Activated CD4-positive, alpha-beta T cell treated with anti-CD3 and anti-CD28 coated beads, Interleukin-2, amount 10 ng/mL, durations not matched to agents 24 days and 14 days (primary cell): ENCODE measurements at regions of chr10 and their contacts with region 1.

Region 1: GRCh38 chr10:80205478-80206276 is at the start of gene ANXA11:
- DNase-seq: peak; percentile 94
- H3K4me3 Mint-ChIP-seq: peak within 1 kb of the TSS; percentile 84
- H3K27ac Mint-ChIP-seq: peak within 1 kb of the TSS; percentile 94
- H3K4me1 Mint-ChIP-seq: peaks cover 45% of the 10 kb centered on the region
- H3K27me3 Mint-ChIP-seq: no peaks in the 10 kb centered on the region
- total RNA-seq, gene ANXA11: 223 and 232 TPM in 2 replicates

Region 2: DNA sequence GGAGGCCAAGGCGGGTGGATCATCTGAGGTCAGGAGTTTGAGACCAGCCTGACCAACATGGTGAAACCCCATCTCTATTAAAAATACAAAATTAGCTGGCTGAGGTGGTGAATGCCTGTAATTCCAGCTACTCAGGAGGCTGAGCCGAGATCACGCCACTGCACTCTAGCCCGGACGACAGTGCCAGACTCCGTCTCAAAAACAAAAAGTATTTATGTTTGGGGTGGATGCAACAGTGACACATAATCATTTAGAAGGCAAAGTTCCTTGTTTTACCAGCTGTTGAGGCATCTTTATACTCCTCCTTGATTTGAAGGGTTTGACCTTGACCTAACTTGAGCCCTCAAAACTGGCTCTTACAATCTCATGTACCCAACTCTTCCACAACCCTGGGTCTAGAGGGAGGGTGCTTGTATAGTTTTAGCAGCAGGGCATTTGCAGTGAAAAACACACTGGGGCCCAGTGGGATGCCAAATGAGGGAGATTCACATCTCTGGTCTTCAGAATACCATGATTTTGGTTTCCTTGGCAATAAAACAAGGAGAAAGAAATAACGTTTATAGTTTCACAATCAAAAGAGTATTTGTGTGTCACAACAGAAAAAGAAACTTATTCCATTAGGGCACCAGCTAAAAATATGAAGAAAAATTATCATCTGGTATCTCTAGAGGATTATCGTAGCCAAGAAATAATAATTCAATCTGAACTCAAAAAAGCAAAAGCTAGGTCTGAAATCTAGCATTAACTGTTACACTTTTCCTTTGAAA is 141.4 kb before region 1 on chr10:
- intact Hi-C with region 1: no loop called
- DNase-seq: no peak
- H3K4me3 Mint-ChIP-seq: no peak overlapping the region
- H3K27ac Mint-ChIP-seq: no peak overlapping the region
- H3K4me1 Mint-ChIP-seq: no peaks in the 10 kb centered on the region
- H3K27me3 Mint-ChIP-seq: peaks cover 5% of the 10 kb centered on the region

Region 3: GRCh38 chr10:80078448-80079311 is 127.0 kb before region 1 on chr10 and contains the start of gene TMEM254:
- intact Hi-C with region 1: loop called (anchors 5 kb)
- DNase-seq: peak; percentile 97
- H3K4me3 Mint-ChIP-seq: peak within 1 kb of the TSS; percentile 97
- H3K27ac Mint-ChIP-seq: peak within 1 kb of the TSS; percentile 97
- H3K4me1 Mint-ChIP-seq: peaks cover 23% of the 10 kb centered on the region
- H3K27me3 Mint-ChIP-seq: no peaks in the 10 kb centered on the region
- total RNA-seq, gene TMEM254: 13.1 and 14.8 TPM in 2 replicates

Region 4: GRCh38 chr10:80144067-80144695 is 61.5 kb before region 1 on chr10:
- intact Hi-C with region 1: loop called (anchors 1 kb)
- DNase-seq: peak; percentile 72
- H3K4me3 Mint-ChIP-seq: peak overlapping the region; percentile 80
- H3K27ac Mint-ChIP-seq: peak overlapping the region; percentile 20
- H3K4me1 Mint-ChIP-seq: peaks cover 15% of the 10 kb centered on the region
- H3K27me3 Mint-ChIP-seq: peaks cover 3% of the 10 kb centered on the region

Region 5: GRCh38 chr10:80187465-80188409 is 17.9 kb before region 1 on chr10:
- intact Hi-C with region 1: loop called (anchors 1 kb)
- DNase-seq: peak; percentile 94
- H3K4me3 Mint-ChIP-seq: peak overlapping the region; percentile 76
- H3K27ac Mint-ChIP-seq: peak overlapping the region; percentile 89
- H3K4me1 Mint-ChIP-seq: peaks cover 71% of the 10 kb centered on the region
- H3K27me3 Mint-ChIP-seq: no peaks in the 10 kb centered on the region